Activated CD4-positive, alpha-beta T cell treated with anti-CD3 and anti-CD28 coated beads for 36 hours (primary cell): ENCODE measurements at regions of chr22 and their contacts with region 1.

Region 1: GRCh38 chr22:36454916-36455570 is 26.4 kb downstream of the TXN2 start:
- DNase-seq: peak; percentile 98
- ATAC-seq: peak; percentile 82
- H3K4me3 Mint-ChIP-seq: peak overlapping the region; percentile 71
- H3K27ac Mint-ChIP-seq: peak overlapping the region; percentile 67
- H3K4me1 Mint-ChIP-seq: peaks cover 44% of the 10 kb centered on the region
- H3K27me3 Mint-ChIP-seq: no peaks in the 10 kb centered on the region

Region 2: GRCh38 chr22:36409911-36410756 is 44.9 kb before region 1 on chr22:
- CTCF ChIA-PET with region 1: interaction called, 3 read pairs
- POLR2A ChIA-PET with region 1: interaction called, 3 read pairs
- intact Hi-C with region 1: loop called in 1 of 2 experiments (anchors 2 kb)
- DNase-seq: peak; percentile 82
- ATAC-seq: peak; percentile 56
- H3K4me3 Mint-ChIP-seq: peak overlapping the region; percentile 76
- H3K27ac Mint-ChIP-seq: peak overlapping the region; percentile 73
- H3K4me1 Mint-ChIP-seq: peaks cover 37% of the 10 kb centered on the region
- H3K27me3 Mint-ChIP-seq: no peaks in the 10 kb centered on the region

Region 3: DNA sequence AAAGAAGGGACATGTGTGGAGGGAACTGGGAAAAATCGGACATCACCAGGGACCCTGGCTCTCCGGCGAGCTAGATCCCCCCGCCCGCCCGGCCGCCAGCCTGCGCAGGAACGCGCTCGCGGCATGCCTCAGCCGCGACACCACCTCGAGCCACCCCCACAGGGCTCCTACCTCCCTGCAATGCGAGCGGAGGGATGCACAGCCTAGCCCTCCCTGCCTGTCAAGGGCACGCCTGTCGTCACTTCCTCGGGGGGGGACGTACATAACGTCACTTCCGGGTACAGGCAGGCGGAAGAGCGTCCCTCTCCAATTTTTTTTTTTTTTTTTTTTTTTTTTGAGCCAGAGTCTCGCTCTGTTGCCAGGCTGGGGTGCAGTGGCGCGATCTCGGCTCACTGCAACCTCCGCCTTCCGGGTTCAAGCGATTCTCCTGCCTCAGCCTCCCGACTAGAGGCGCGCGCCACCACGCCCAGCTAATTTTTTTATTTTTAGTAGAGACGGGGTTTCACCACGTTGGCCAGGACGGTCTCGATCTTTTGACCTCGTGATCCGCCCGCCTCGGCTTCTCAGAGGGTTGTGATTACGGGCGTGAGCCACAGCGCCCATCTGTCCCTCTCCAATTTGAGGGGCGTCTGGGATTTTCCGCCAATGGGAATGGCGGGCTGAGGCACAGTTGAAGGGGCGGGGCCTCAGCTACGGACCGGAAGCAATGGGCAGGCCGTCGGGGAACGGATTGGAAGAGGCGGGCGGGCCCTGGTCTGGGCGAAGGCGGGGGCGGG is 26.5 kb after region 1 on chr22 and contains the start of gene TXN2:
- CTCF ChIA-PET with region 1: interaction called, 3 read pairs
- POLR2A ChIA-PET with region 1: interaction called, 4 read pairs
- intact Hi-C with region 1: loop called in 1 of 2 experiments (anchors 1 kb)
- DNase-seq: peak; percentile 97
- ATAC-seq: peak; percentile 89
- H3K4me3 Mint-ChIP-seq: peak within 1 kb of the TSS; percentile 81
- H3K27ac Mint-ChIP-seq: peak within 1 kb of the TSS; percentile 94
- H3K4me1 Mint-ChIP-seq: peaks cover 19% of the 10 kb centered on the region
- H3K27me3 Mint-ChIP-seq: no peaks in the 10 kb centered on the region
- total RNA-seq, gene TXN2: 95.5 to 99.1 TPM